ENCODE measurements at regions of chr17 and their contacts with region 1.

Region 1: GRCh38 chr17:18183334-18184142 is at the start of gene ALKBH5:
- DNase-seq: peak; percentile 100
- ATAC-seq: peak; percentile 82
- H3K4me3 ChIP-seq: peak within 1 kb of the TSS; percentile 65 to 94 (median 81)
- H3K4me3 Mint-ChIP-seq: peak within 1 kb of the TSS; percentile 99
- H3K27ac ChIP-seq: peak within 1 kb of the TSS; percentile 93 to 96
- H3K27ac Mint-ChIP-seq: peak within 1 kb of the TSS; percentile 100
- H3K4me1 ChIP-seq: peaks cover 45 to 49% of the 10 kb centered on the region in 2 donors
- H3K4me1 Mint-ChIP-seq: peaks cover 50% of the 10 kb centered on the region
- H3K27me3 ChIP-seq: no peaks in the 10 kb centered on the region
- H3K27me3 Mint-ChIP-seq: no peaks in the 10 kb centered on the region
- CTCF ChIP-seq: peak; percentile 63
- total RNA-seq, gene ALKBH5: 103 and 104 TPM in 2 replicates

Region 2: GRCh38 chr17:17972126-17972951 is 211.2 kb before region 1 on chr17 and contains the starts of genes DRC3 and TOM1L2:
- CTCF ChIA-PET with region 1: no interaction called
- POLR2A ChIA-PET with region 1: interaction called, 4 read pairs
- intact Hi-C with region 1: loop called (anchors 1 kb)
- DNase-seq: peak; percentile 100
- ATAC-seq: peak; percentile 90
- H3K4me3 ChIP-seq: peak within 1 kb of the TSS; percentile 41 to 82 (median 76)
- H3K4me3 Mint-ChIP-seq: peak within 1 kb of the TSS; percentile 97
- H3K27ac ChIP-seq: peak within 1 kb of the TSS; percentile 52 to 89
- H3K27ac Mint-ChIP-seq: peak within 1 kb of the TSS; percentile 96
- H3K4me1 ChIP-seq: peaks cover 12 to 17% of the 10 kb centered on the region in 2 donors
- H3K4me1 Mint-ChIP-seq: peaks cover 22% of the 10 kb centered on the region
- H3K27me3 ChIP-seq: no peaks in the 10 kb centered on the region
- H3K27me3 Mint-ChIP-seq: no peaks in the 10 kb centered on the region
- CTCF ChIP-seq: no peak
- total RNA-seq, gene DRC3: 0.17 TPM in 1 of 2 replicates, not detected in the other
- total RNA-seq, gene TOM1L2: 29.7 and 34.4 TPM in 2 replicates

Region 3: GRCh38 chr17:18141210-18141803 is 42.2 kb before region 1 on chr17:
- CTCF ChIA-PET with region 1: interaction called, 6 read pairs
- POLR2A ChIA-PET with region 1: no interaction called
- intact Hi-C with region 1: loop called (anchors 1 kb)
- DNase-seq: peak; percentile 77
- ATAC-seq: peak; percentile 75
- H3K4me3 ChIP-seq: no peak overlapping the region
- H3K4me3 Mint-ChIP-seq: no peak overlapping the region
- H3K27ac ChIP-seq: no peak overlapping the region
- H3K27ac Mint-ChIP-seq: no peak overlapping the region
- H3K4me1 ChIP-seq: peaks cover 0 to 4% of the 10 kb centered on the region in 2 donors
- H3K4me1 Mint-ChIP-seq: peaks cover 5% of the 10 kb centered on the region
- H3K27me3 ChIP-seq: peaks cover 0 to 13% (median 1%) of the 10 kb centered on the region in 4 experiments
- H3K27me3 Mint-ChIP-seq: peaks cover 7% of the 10 kb centered on the region
- CTCF ChIP-seq: peak; percentile 81

Region 4: DNA sequence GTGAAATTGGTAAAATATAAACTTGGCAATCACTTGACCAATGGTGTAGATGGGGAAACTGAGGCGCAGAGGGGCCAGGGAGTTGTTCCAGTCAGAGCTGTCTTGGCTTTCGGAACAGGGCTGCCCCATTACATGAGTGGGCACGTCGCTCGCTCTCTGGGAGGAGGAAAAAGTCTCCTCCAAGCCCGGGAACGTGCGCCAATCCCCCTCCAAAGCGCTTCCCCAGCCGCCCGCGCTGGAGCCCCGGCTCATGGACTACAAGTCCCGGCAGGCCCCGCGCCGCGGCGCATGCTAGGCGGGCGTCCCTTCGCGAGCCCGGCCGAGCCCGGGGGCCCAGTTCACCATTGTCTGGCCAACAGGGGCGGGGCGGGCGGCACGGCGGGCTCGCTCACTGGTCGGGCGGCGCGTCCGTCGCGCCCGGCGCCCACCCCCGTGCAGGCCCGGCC is 41.6 kb after region 1 on chr17:
- CTCF ChIA-PET with region 1: interaction called, 3 read pairs
- POLR2A ChIA-PET with region 1: interaction called, 3 read pairs
- intact Hi-C with region 1: loop called (anchors 1 kb)
- DNase-seq: peak; percentile 95
- ATAC-seq: peak; percentile 98
- H3K4me3 ChIP-seq: peak overlapping the region in 4 of 5 experiments; percentile 19 to 45 (median 40)
- H3K4me3 Mint-ChIP-seq: peak overlapping the region; percentile 72
- H3K27ac ChIP-seq: no peak overlapping the region
- H3K27ac Mint-ChIP-seq: no peak overlapping the region
- H3K4me1 ChIP-seq: peaks cover 10 to 16% of the 10 kb centered on the region in 2 donors
- H3K4me1 Mint-ChIP-seq: peaks cover 10% of the 10 kb centered on the region
- H3K27me3 ChIP-seq: no peaks in the 10 kb centered on the region
- H3K27me3 Mint-ChIP-seq: no peaks in the 10 kb centered on the region
- CTCF ChIP-seq: no peak

Region 5: DNA sequence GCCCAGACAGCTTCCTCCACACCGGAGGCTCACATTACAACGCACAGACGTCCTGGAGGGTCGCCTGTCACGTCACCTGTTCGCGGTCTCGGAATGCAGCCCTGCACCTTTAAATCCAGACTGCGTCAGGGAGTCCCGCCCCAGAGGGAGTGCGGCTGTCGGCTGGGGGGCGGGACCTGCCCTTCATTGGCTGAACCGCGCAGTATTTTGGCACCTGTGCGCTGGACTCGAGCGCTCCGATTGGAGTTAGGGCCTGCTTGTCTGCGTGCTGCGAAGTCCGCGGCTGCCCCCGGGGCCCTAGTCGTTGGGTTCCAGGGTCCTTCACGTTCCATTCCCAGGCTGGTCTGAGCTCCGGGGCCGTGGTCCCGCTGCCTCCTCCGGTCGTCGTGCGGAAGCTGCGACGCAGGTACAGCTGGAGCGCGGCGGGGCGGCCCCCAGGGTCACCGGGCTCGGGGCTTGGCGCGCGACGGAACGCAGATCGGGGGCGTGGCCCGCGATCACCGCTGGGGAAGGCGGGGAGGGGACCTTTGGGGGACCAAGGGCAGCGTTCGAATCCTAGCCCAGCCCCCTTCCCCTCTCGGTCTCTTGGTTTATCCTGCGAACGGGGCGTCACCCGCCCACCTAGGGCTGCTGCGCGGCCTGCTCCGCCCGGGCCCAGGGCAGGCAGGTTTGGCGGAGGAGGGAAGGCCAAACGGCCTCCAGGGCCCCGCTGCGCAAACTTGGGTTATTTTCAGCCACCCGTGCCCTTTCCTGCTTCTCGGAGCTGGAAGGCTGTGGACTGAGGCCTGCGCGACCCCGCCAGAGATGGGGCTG is 77.0 kb after region 1 on chr17 and contains the start of gene MIEF2:
- CTCF ChIA-PET with region 1: no interaction called
- POLR2A ChIA-PET with region 1: interaction called, 4 read pairs
- intact Hi-C with region 1: loop called (anchors 1 kb)
- DNase-seq: peak; percentile 94
- ATAC-seq: peak; percentile 85
- H3K4me3 ChIP-seq: peak within 1 kb of the TSS; percentile 45 to 88 (median 77)
- H3K4me3 Mint-ChIP-seq: peak within 1 kb of the TSS; percentile 86
- H3K27ac ChIP-seq: peak within 1 kb of the TSS; percentile 84 to 89
- H3K27ac Mint-ChIP-seq: peak within 1 kb of the TSS; percentile 87
- H3K4me1 ChIP-seq: peaks cover 28 to 43% of the 10 kb centered on the region in 2 donors
- H3K4me1 Mint-ChIP-seq: peaks cover 31% of the 10 kb centered on the region
- H3K27me3 ChIP-seq: no peaks in the 10 kb centered on the region
- H3K27me3 Mint-ChIP-seq: no peaks in the 10 kb centered on the region
- CTCF ChIP-seq: no peak
- total RNA-seq, gene MIEF2: 16.3 and 18.7 TPM in 2 replicates